Endothelial cell of umbilical vein (primary cell): ENCODE measurements at regions of chr1 and their contacts with region 1.

Region 1: GRCh38 chr1:63442141-63442475 is 74.7 kb downstream of the ALG6 start:
- DNase-seq: no peak
- H3K4me3 ChIP-seq: no peak overlapping the region
- H3K27ac ChIP-seq: no peak overlapping the region
- H3K4me1 ChIP-seq: no peaks in the 10 kb centered on the region
- H3K27me3 ChIP-seq: no peaks in the 10 kb centered on the region
- CTCF ChIP-seq: no peak
- POLR2A ChIP-seq: no peak

Region 2: DNA sequence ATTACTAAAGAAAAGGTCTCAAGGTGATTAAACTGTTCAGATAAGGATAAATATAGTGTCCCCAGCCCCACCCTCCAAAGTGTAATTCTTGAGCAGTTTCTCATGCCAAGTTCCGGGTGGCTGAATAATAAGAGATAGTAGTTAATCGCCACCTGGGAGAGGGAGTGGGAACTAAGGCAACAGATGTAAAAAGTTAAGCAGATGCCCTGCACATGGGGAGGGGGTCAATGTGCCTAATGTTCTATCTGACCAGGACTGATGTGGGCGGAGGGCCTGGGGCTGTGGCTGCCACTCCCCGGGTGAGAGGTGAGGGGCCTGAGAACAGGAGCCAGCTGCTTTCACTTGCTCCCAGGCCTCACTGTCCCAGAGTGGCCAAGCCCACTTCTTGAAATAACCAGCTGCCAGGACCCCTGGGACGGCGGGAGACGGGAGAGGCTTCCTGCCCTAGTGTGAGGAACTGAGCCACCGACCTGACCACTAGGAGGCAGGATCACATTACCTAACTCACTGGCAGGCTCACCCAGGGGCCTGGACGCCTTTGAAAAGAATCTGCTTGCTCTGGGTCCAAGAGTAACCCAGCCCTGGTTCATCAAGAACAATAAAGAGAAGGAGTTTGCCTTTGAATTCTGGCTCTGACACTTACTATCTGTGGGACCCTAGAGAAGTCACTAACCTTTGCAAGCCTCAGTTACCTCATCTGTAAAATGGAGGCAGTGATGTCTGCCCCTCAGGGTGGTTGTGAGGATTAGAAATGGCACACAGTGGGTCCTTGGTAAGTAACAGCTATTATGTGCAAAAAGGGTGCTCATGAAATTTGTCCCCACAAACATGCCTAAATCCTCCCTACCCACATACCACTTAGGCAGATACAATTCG is 479.0 kb before region 1 on chr1:
- CTCF ChIA-PET with region 1: interaction called, 3 read pairs
- POLR2A ChIA-PET with region 1: no interaction called
- dilution Hi-C with region 1: no loop called
- intact Hi-C with region 1: loop called (anchors 1 kb)
- DNase-seq: peak; percentile 29
- H3K4me3 ChIP-seq: no peak overlapping the region
- H3K27ac ChIP-seq: no peak overlapping the region
- H3K4me1 ChIP-seq: no peaks in the 10 kb centered on the region
- H3K27me3 ChIP-seq: no peaks in the 10 kb centered on the region
- CTCF ChIP-seq: peak; percentile 51 to 67
- POLR2A ChIP-seq: no peak

Region 3: DNA sequence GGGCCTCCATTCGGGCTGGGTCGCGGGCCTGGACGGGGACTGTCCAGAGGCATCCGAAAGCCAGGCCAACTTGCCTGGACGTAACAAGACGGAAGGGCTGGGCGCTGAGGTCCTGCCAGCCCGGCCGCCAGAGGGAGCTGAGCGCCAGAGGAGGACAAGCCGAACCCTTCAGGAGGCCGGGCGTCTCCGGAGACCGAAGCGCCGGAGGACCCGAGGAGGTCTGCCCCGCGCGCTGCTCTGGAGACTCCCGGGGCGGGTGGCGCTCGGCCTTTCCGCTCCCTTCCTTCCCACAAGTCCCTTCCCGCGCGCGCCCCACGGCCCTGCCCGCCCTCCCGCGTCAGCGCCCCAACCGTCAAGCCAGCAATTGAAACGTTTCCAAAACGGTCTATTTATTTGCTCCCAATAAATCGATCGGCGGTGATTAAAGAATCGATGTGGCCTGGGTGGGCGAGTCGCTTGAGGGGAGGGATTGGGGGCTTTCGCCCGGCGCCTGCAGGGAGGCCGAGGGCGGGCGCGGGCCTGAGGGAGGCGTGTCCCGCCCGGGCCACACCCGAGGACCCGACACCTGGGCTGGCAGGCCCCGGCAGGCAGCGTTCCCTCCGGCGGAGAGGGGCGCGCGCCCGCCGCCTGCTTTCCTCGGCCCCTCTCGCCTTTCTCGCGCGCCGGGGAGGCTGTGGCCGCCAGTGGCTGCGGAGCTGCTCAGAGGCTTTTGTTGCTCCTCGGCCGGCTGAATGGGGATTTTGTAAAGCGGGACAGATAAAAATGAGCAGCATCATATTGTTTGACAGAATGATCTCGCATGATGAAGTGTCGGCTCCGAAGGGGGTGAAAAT is 124.9 kb before region 1 on chr1:
- CTCF ChIA-PET with region 1: interaction called, 6 read pairs
- POLR2A ChIA-PET with region 1: no interaction called
- dilution Hi-C with region 1: no loop called
- intact Hi-C with region 1: loop called (anchors 1 kb)
- DNase-seq: peak; percentile 54
- H3K4me3 ChIP-seq: peak overlapping the region in 1 of 3 experiments; percentile 21
- H3K27ac ChIP-seq: no peak overlapping the region
- H3K4me1 ChIP-seq: peaks cover 2% of the 10 kb centered on the region
- H3K27me3 ChIP-seq: peaks cover 65 to 72% of the 10 kb centered on the region in 2 experiments
- CTCF ChIP-seq: peak; percentile 57 to 79
- POLR2A ChIP-seq: no peak

Region 4: GRCh38 chr1:63367215-63368103 is 74.6 kb before region 1 on chr1 and contains the start of gene ALG6:
- CTCF ChIA-PET with region 1: no interaction called
- POLR2A ChIA-PET with region 1: no interaction called
- dilution Hi-C with region 1: no loop called
- intact Hi-C with region 1: loop called (anchors 5 kb)
- DNase-seq: peak; percentile 95
- H3K4me3 ChIP-seq: peak within 1 kb of the TSS; percentile 29 to 92 (median 65)
- H3K27ac ChIP-seq: no peak within 1 kb of the TSS
- H3K4me1 ChIP-seq: peaks cover 10% of the 10 kb centered on the region
- H3K27me3 ChIP-seq: no peaks in the 10 kb centered on the region
- CTCF ChIP-seq: no peak
- POLR2A ChIP-seq: peak; percentile 88
- total RNA-seq, gene ALG6: 14.4 and 17.3 TPM in 2 replicates

Region 5: GRCh38 chr1:63522891-63523728 is 81.0 kb after region 1 on chr1 and contains the starts of genes EFCAB7 and ITGB3BP:
- CTCF ChIA-PET with region 1: no interaction called
- POLR2A ChIA-PET with region 1: no interaction called
- dilution Hi-C with region 1: no loop called
- intact Hi-C with region 1: no loop called
- DNase-seq: peak; percentile 91
- H3K4me3 ChIP-seq: peak within 1 kb of the TSS; percentile 55 to 95 (median 75)
- H3K27ac ChIP-seq: peak within 1 kb of the TSS; percentile 82
- H3K4me1 ChIP-seq: peaks cover 13% of the 10 kb centered on the region
- H3K27me3 ChIP-seq: no peaks in the 10 kb centered on the region
- CTCF ChIP-seq: no peak
- POLR2A ChIP-seq: peak; percentile 72
- total RNA-seq, gene EFCAB7: 6.1 and 7.1 TPM in 2 replicates
- total RNA-seq, gene ITGB3BP: 24.4 and 26.6 TPM in 2 replicates

Region 6: DNA sequence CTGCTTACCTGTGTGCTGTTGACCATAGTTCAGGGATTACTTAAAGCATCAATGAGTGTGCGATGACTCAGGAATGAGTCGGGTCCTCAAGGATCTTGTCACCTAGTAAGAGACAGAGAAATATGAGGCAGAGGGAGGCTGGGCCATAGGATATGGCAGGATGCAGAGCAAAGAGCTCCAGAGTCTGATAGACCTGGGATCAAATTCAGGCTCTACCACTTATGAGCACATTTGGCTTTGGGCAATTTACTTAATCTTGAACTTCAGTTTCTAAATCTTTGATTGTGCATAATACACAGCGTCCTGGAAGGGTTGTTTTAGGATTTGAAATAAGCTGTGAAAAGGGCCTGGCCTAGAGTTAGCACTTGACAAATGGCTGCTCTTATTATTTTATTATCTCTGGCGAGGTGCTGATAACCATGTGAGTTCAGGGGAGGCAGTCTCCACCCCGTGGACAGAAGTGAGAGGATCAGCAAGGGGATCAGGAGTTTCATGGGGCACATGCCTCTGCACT is 426.2 kb after region 1 on chr1:
- CTCF ChIA-PET with region 1: no interaction called
- POLR2A ChIA-PET with region 1: no interaction called
- dilution Hi-C with region 1: no loop called
- intact Hi-C with region 1: no loop called
- DNase-seq: peak; percentile 8
- H3K4me3 ChIP-seq: no peak overlapping the region
- H3K27ac ChIP-seq: no peak overlapping the region
- H3K4me1 ChIP-seq: no peaks in the 10 kb centered on the region
- H3K27me3 ChIP-seq: no peaks in the 10 kb centered on the region
- CTCF ChIP-seq: no peak
- POLR2A ChIP-seq: no peak